ENCODE measurements at regions of chr12 and their contacts with region 1.

Region 1: GRCh38 chr12:93109551-93110203 is 180.6 kb upstream of the EEA1 start:
- DNase-seq: no peak
- H3K4me3 ChIP-seq: no peak overlapping the region
- H3K27ac ChIP-seq: peak overlapping the region; percentile 82 to 96
- H3K4me1 ChIP-seq: peaks cover 6 to 40% of the 10 kb centered on the region in 2 experiments
- H3K27me3 ChIP-seq: no peaks in the 10 kb centered on the region
- CTCF ChIP-seq: no peak
- EP300 ChIP-seq: no peak
- RAD21 ChIP-seq: no peak

Region 2: GRCh38 chr12:93098077-93098476 is 11.6 kb before region 1 on chr12:
- CTCF ChIA-PET with region 1: interaction called, 10 read pairs
- POLR2A ChIA-PET with region 1: no interaction called
- DNase-seq: no peak
- H3K4me3 ChIP-seq: no peak overlapping the region
- H3K27ac ChIP-seq: no peak overlapping the region
- H3K4me1 ChIP-seq: peaks cover 8 to 22% of the 10 kb centered on the region in 2 experiments; a peak in 3 of 4 replicates
- H3K27me3 ChIP-seq: no peaks in the 10 kb centered on the region
- CTCF ChIP-seq: peak; percentile 55
- EP300 ChIP-seq: no peak
- RAD21 ChIP-seq: peak; percentile 45